K562 (cell line): ENCODE measurements at regions of chr7 and their contacts with region 1.

Region 1: DNA sequence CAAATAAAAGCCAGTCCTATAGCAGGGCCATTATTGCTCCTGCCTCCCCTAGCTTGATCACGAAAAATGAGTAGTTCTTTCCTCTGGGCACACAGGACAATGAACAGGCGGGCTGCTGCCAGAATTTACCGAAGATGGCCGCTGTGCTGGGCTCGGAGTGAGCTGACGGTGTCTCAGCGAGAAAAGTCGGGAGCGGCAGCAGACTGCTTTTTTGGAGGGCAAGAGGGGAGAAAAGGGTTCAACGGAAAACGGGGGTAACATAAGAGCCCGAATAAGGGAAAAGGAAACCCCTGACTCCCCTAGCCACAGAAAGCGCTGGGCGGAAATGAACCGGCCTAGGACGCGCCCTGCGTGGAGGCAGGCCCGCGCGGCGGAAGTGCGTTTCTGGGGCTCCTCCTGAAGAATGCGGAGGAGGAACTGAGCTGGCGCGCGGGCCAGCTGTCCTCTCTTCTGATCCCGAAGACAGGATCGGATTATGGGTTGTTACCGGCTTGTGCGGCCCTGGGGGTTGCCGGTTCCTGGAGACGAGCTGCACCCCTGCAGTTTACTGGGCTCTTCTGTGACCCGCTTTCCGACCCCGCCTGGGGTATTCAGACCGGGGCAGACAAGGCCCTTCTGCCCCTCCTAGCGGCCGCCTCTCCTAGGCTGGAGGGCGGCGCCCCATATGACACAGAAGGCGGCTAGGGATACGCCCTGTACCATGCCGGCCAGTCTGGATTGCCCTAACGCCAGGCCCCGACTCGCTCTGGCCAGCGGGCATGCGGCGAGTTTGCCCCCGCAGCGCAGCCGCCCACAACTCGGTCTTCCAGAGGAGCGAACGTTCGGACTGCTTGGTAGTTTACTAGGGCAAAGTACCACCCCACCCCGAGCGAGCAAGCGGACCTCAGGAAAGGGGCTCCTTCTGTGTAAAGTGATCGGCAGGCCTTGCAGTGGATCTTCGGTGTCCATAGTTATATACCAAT is 30.1 kb upstream of the KMT2E start:
- DNase-seq: peak; percentile 89 to 95 (median 92)
- ATAC-seq: peak; percentile 98
- H3K4me3 ChIP-seq: peak overlapping the region; percentile 58
- H3K27ac ChIP-seq: peak overlapping the region; percentile 95
- H3K4me1 ChIP-seq: peaks cover 14 to 19% of the 10 kb centered on the region in 2 experiments; a peak in 4 of 5 replicates
- H3K27me3 ChIP-seq: no peaks in the 10 kb centered on the region
- CTCF ChIP-seq: peak; percentile 74 to 79 (median 75)
- EP300 ChIP-seq: peak; percentile 46
- POLR2A ChIP-seq: peak; percentile 98
- RAD21 ChIP-seq: peak; percentile 58 to 65

Region 2: GRCh38 chr7:104943502-104944343 is 40.1 kb before region 1 on chr7:
- CTCF ChIA-PET with region 1: interaction called, 3 read pairs
- POLR2A ChIA-PET with region 1: interaction called, 3 read pairs
- in situ Hi-C with region 1: no loop called
- intact Hi-C with region 1: loop called (anchors 5 kb)
- DNase-seq: peak; percentile 76 to 95 (median 83)
- ATAC-seq: peak; percentile 87
- H3K4me3 ChIP-seq: no peak overlapping the region
- H3K27ac ChIP-seq: peak overlapping the region; percentile 63; the same call in 2 of the 3 replicates
- H3K4me1 ChIP-seq: peaks cover 20 to 23% of the 10 kb centered on the region in 2 experiments
- H3K27me3 ChIP-seq: peaks cover 0 to 8% of the 10 kb centered on the region in 2 experiments; a peak in 2 of 5 replicates
- CTCF ChIP-seq: no peak
- EP300 ChIP-seq: peak; percentile 45
- POLR2A ChIP-seq: no peak
- RAD21 ChIP-seq: peak in 1 of 2 experiments; percentile 2; a peak in 1 of 4 replicates

Region 3: DNA sequence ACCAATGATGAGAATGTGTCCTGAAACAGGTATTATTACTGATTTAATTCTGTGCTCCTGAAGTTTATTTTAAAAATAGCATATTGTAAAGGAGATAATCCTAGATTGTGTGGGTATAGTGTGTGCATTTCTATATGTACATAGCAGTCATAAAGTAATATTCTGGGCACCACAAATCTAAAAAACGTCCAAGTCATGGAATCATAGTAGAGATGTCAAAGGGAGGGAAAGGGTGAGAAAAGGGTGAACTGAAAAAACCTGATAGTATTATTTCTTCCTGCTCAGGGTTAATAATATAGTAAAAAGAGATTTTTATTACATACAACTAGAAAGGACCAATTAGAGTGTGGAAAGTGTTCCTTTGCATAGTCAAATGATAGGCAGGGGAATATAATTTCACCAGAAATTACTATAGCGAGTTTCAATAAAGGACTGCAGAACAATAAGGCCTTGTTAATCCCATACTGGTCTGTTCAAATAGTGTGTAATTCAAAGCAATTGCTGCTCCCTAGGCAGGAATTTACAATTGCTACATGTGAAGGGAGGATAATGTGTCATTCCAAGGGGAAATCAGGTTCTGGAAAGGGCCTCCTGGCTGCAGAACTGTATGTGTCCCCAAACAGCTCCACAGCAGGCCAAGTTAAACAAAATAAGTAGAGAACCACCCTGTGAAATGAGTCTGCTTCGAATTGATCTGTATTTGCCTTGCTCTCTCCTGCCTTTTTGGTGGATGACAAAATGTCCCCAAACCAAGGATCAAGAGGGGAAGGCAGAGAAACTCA is 12.4 kb before region 1 on chr7:
- CTCF ChIA-PET with region 1: no interaction called
- POLR2A ChIA-PET with region 1: interaction called, 15 read pairs
- in situ Hi-C with region 1: no loop called
- intact Hi-C with region 1: no loop called
- DNase-seq: no peak
- ATAC-seq: no peak
- H3K4me3 ChIP-seq: no peak overlapping the region
- H3K27ac ChIP-seq: no peak overlapping the region
- H3K4me1 ChIP-seq: peaks cover 8 to 11% of the 10 kb centered on the region in 2 experiments; a peak in 4 of 5 replicates
- H3K27me3 ChIP-seq: no peaks in the 10 kb centered on the region; a peak in 1 of 5 replicates
- CTCF ChIP-seq: no peak
- EP300 ChIP-seq: no peak
- POLR2A ChIP-seq: no peak
- RAD21 ChIP-seq: no peak

Region 4: GRCh38 chr7:105046414-105046813 is 62.6 kb after region 1 on chr7:
- CTCF ChIA-PET with region 1: interaction called, 8 read pairs
- POLR2A ChIA-PET with region 1: interaction called, 4 read pairs
- in situ Hi-C with region 1: no loop called
- intact Hi-C with region 1: loop called (anchors 1 kb)
- DNase-seq: no peak
- ATAC-seq: no peak
- H3K4me3 ChIP-seq: no peak overlapping the region
- H3K27ac ChIP-seq: no peak overlapping the region
- H3K4me1 ChIP-seq: peaks cover 0 to 6% of the 10 kb centered on the region in 2 experiments; a peak in 2 of 5 replicates
- H3K27me3 ChIP-seq: no peaks in the 10 kb centered on the region
- CTCF ChIP-seq: no peak
- EP300 ChIP-seq: no peak
- POLR2A ChIP-seq: no peak
- RAD21 ChIP-seq: no peak

Region 5: GRCh38 chr7:105131033-105131656 is 147.3 kb after region 1 on chr7:
- CTCF ChIA-PET with region 1: no interaction called
- POLR2A ChIA-PET with region 1: interaction called, 5 read pairs
- in situ Hi-C with region 1: no loop called
- intact Hi-C with region 1: loop called (anchors 10 kb)
- DNase-seq: peak; percentile 80 to 87 (median 84)
- ATAC-seq: peak; percentile 90
- H3K4me3 ChIP-seq: no peak overlapping the region
- H3K27ac ChIP-seq: peak overlapping the region; percentile 76
- H3K4me1 ChIP-seq: peaks cover 13 to 25% of the 10 kb centered on the region in 2 experiments
- H3K27me3 ChIP-seq: no peaks in the 10 kb centered on the region
- CTCF ChIP-seq: no peak
- EP300 ChIP-seq: peak; percentile 52; the same call in 1 of the 2 replicates
- POLR2A ChIP-seq: peak; percentile 38; the same call in 1 of the 2 replicates
- RAD21 ChIP-seq: no peak

Region 6: DNA sequence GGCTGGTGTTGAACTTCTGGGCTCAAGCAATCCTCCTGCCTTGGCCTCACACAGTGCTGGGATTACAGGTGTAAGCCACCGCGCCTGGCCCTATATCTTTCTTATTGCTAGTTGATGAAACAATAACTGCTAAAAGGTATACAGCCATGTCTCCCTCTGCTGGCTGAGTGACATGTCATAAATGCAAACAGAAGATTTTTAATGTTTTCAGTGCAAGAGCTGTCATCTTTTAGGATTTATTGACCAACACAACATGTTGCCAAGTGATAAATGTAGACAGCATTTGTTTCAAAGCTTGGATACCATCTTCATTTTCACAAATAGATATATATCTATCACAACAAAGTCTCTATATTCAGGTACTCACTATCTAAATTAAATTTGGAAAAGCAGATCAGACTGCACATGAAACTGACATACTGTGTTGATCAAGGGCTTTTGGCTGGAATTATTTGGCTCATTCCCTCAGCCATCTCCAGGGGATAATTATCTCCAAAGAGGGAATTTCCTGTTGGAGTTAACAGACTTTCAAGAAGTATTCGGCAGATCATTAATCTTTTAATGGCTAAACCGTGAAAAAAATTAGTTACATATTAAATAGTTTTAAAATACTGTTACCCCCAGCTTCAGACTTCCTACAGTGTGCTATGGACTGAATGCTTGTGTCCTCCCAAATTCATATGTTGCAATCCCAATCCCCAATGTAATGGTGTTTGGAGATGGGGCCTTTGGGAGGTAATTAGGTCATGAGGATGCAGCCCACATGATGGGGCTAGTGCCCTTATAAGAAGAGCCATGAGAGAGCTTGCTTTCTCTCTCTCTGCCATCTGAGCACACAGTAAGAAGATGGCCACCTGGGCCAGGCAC is 446.1 kb after region 1 on chr7:
- CTCF ChIA-PET with region 1: interaction called, 6 read pairs
- POLR2A ChIA-PET with region 1: no interaction called
- in situ Hi-C with region 1: no loop called
- intact Hi-C with region 1: loop called (anchors 2 kb)
- DNase-seq: peak in 3 of 4 experiments; percentile 41 to 82 (median 63)
- ATAC-seq: peak; percentile 90
- H3K4me3 ChIP-seq: no peak overlapping the region
- H3K27ac ChIP-seq: no peak overlapping the region
- H3K4me1 ChIP-seq: peaks cover 0 to 5% of the 10 kb centered on the region in 2 experiments; a peak in 1 of 5 replicates
- H3K27me3 ChIP-seq: no peaks in the 10 kb centered on the region
- CTCF ChIP-seq: peak; percentile 74 to 92 (median 80)
- EP300 ChIP-seq: peak; percentile 41
- POLR2A ChIP-seq: no peak
- RAD21 ChIP-seq: peak; percentile 87 to 95

Region 7: DNA sequence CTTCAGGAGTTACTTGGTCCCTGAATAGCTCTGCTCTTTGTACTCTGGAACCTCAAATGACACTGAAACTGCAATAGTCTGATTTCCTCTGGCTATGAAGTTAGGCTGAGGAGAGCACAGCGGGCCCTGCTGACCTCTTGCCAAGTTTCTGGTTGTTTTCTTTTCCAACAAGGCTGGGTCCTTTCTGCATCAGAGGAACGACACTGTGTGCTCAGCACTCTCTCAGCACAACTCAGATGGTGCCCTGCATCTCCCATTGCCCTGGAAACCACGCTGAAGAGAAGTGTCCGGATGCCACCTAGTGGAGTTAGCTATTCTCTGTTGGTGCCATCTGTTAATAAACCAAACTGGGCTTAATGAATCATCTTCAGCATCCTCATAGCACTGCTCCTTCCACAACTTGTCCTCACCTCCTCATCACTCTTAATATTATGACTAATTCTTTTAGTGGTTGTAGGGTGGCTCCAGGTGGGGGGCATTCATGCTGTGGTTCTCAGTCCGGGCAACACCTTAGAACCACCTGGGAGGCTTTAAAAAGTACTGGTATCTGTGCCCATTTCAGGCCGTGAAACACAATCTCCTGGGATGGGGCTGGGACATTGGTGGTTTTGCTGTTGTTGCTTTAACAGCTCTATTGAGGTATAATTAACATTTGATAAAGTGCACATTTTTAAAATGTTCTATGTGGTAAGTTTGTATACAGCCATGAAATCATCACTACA is 605.7 kb after region 1 on chr7:
- CTCF ChIA-PET with region 1: no interaction called
- POLR2A ChIA-PET with region 1: no interaction called
- in situ Hi-C with region 1: no loop called
- intact Hi-C with region 1: loop called (anchors 5 kb)
- DNase-seq: peak in 3 of 4 experiments; percentile 37 to 64 (median 47)
- ATAC-seq: peak; percentile 68
- H3K4me3 ChIP-seq: no peak overlapping the region
- H3K27ac ChIP-seq: no peak overlapping the region
- H3K4me1 ChIP-seq: peaks cover 0 to 13% of the 10 kb centered on the region in 2 experiments; a peak in 3 of 5 replicates
- H3K27me3 ChIP-seq: no peaks in the 10 kb centered on the region
- CTCF ChIP-seq: peak; percentile 66 to 75 (median 71)
- EP300 ChIP-seq: no peak
- POLR2A ChIP-seq: no peak
- RAD21 ChIP-seq: peak; percentile 25 to 72; a peak in 3 of 4 replicates

Region 8: DNA sequence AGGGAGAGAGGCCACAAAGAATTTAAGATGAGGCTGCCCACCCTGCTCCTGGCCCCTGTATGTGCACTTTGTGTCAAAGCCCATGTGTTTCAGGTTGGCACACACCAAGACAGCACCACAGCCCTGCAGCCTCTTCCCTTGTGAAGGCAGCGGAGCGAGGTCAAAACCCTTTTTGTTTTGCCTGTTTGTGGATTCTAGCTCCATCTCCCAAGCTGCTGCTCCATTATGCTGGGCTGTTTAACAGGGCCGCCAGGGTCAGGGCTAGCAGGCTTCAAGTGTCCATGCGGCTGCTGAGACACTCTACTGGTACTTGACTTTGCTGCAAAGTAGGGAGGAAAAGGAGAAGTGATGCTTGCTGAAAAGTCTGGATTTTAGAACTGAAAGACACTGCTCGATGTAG is 739.7 kb after region 1 on chr7:
- CTCF ChIA-PET with region 1: no interaction called
- POLR2A ChIA-PET with region 1: no interaction called
- in situ Hi-C with region 1: no loop called
- intact Hi-C with region 1: no loop called
- DNase-seq: no peak
- ATAC-seq: peak; percentile 28; the same call in 1 of the 3 replicates
- H3K4me3 ChIP-seq: no peak overlapping the region
- H3K27ac ChIP-seq: no peak overlapping the region
- H3K4me1 ChIP-seq: no peaks in the 10 kb centered on the region
- H3K27me3 ChIP-seq: peaks cover 8 to 17% of the 10 kb centered on the region in 2 experiments; a peak in 3 of 5 replicates
- CTCF ChIP-seq: no peak
- EP300 ChIP-seq: no peak
- POLR2A ChIP-seq: no peak
- RAD21 ChIP-seq: no peak